ENCODE measurements at regions of chr12 and their contacts with region 1.

Region 1: DNA sequence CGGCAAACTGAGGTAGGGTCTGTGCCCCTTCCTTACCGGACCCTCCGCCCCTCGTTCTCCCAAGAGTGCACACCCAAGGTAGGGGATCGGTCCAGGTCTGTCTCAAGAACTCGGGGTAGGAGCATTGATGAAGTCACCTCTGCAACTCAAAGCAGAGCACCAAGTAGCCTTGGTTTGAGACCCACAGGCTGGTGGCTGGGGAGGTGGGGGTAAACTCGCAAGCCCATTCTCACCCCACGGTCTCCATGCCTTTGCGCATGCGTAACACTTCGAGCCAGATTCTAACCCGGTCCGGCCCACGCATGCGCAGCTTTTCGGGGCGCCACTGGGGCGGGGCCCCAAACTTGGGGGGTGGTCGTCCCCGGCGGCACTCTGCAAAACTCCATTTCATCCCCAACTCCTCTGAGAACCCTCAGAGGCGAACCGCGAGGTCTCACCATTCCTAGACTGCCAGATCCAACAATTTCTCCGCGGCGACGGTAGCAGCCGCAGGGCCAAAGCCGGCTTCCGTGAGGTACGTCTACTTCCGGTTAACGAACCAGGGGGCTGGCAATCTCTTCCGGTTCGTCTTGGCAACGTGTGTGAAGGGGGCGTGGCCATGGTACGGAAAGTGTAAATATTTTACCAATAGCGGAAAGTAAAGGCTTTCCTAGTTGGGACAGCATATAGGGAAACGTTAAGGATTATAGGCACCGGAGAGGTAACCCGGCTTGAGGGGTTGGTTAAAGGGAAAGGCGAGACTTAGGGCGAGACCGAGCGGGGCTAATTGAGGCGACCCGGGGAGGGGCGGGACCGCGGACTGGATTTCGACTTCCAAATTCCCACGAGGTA is at the start of gene MCRS1:
- DNase-seq: peak; percentile 76 to 88 (median 85)
- H3K4me3 ChIP-seq: peak within 1 kb of the TSS; percentile 69 to 100 (median 91)
- H3K27ac ChIP-seq: peak within 1 kb of the TSS; percentile 87 to 100 (median 97)
- H3K27me3 ChIP-seq: no peaks in the 10 kb centered on the region
- CTCF ChIP-seq: peak in 28 of 56 donors; percentile 6 to 53 (median 24)
- total RNA-seq, gene MCRS1: 42.9 to 84.1 (median 60.3) TPM

Region 2: DNA sequence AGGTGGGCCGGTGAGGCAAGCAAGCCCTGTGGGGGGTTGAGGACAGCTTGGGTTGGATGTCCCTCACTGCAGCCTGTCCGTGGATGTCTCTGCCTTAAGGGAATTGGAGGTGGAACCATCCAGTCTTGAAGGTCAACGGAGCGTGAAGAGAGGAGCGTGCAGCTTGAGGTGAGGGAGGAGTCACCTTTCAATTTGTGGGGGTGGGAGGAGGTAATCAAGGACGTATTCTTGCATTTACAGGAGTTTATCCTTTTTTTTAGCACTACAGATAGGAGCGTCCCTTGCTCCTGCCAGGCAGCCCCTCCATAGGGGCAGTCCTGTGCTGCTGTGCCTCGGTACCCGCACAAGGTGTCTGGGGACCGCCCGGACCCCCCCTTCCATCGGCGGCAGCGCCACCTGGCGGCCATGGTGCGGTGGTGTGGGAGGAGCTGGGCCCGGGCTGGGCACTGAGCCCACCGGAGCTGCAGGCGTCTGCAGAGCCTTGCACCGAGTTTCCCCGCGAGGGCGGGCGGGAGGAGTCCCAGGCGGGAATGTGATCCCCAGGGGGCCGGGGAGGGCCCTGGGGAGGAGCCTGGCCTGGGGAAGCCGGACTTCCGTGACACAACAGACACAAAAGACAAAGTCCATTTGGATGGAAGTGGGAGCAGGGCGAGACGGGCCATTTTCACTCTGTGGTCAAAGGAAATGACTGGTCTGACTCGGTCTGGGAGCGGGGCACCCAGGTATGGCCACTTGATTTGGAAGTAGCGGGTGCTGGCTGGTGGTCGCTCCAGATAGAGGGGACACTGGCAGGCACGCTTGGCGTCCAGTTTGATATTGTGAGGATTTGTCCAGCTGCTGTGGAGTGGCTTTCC is 220.2 kb before region 1 on chr12:
- intact Hi-C with region 1: loop called in 1 of 2 experiments (anchors 5 kb)
- DNase-seq: peak; percentile 76 to 94 (median 88)
- H3K4me3 ChIP-seq: peak overlapping the region; percentile 8 to 67 (median 52)
- H3K27ac ChIP-seq: peak overlapping the region in 28 of 59 donors; percentile 1 to 76 (median 52)
- H3K27me3 ChIP-seq: peaks cover 0 to 72% (median 39%) of the 10 kb centered on the region in 45 donors
- CTCF ChIP-seq: peak; percentile 71 to 97 (median 91)

Region 3: GRCh38 chr12:49623142-49623904 is 55.5 kb after region 1 on chr12 and contains the start of gene PRPF40B:
- intact Hi-C with region 1: loop called in 1 of 2 experiments (anchors 5 kb)
- DNase-seq: peak; percentile 77 to 92 (median 84)
- H3K4me3 ChIP-seq: peak within 1 kb of the TSS; percentile 51 to 89 (median 75)
- H3K27ac ChIP-seq: peak within 1 kb of the TSS; percentile 48 to 92 (median 85)
- H3K27me3 ChIP-seq: no peaks in the 10 kb centered on the region
- CTCF ChIP-seq: peak in 35 of 56 donors; percentile 6 to 59 (median 33)
- total RNA-seq, gene PRPF40B: 31.6 to 78.4 (median 47.7) TPM

Measured in dorsolateral prefrontal cortex (tissue), 120 donors.